ENCODE measurements at regions of chr7 and their contacts with region 1.

Region 1: GRCh38 chr7:30026229-30027064 is at the start of gene FKBP14:
- DNase-seq: peak; percentile 97 to 99
- H3K4me3 ChIP-seq: peak within 1 kb of the TSS; percentile 89
- H3K4me3 Mint-ChIP-seq: no peak within 1 kb of the TSS
- H3K27ac Mint-ChIP-seq: peak within 1 kb of the TSS; percentile 94
- H3K4me1 ChIP-seq: peaks cover 8% of the 10 kb centered on the region
- H3K4me1 Mint-ChIP-seq: peaks cover 15% of the 10 kb centered on the region
- H3K27me3 ChIP-seq: no peaks in the 10 kb centered on the region
- H3K27me3 Mint-ChIP-seq: no peaks in the 10 kb centered on the region
- CTCF ChIP-seq: no peak
- total RNA-seq, gene FKBP14: 17.5 and 20.3 TPM in 2 replicates

Region 2: GRCh38 chr7:29988424-29989256 is 37.8 kb before region 1 on chr7:
- CTCF ChIA-PET with region 1: no interaction called
- POLR2A ChIA-PET with region 1: interaction called, 4 read pairs
- intact Hi-C with region 1: loop called (anchors 1 kb)
- DNase-seq: peak; percentile 55 to 68
- H3K4me3 ChIP-seq: peak overlapping the region; percentile 100
- H3K4me3 Mint-ChIP-seq: peak overlapping the region; percentile 79
- H3K27ac Mint-ChIP-seq: peak overlapping the region; percentile 88
- H3K4me1 ChIP-seq: peaks cover 14% of the 10 kb centered on the region
- H3K4me1 Mint-ChIP-seq: peaks cover 39% of the 10 kb centered on the region
- H3K27me3 ChIP-seq: no peaks in the 10 kb centered on the region
- H3K27me3 Mint-ChIP-seq: no peaks in the 10 kb centered on the region
- CTCF ChIP-seq: no peak

Measured in Caco-2 (cell line).